A673 (cell line): ENCODE measurements at regions of chr10 and their contacts with region 1.

Region 1: GRCh38 chr10:12348870-12349628 is at the start of gene CAMK1D:
- DNase-seq: peak; percentile 90
- H3K4me3 ChIP-seq: peak within 1 kb of the TSS; percentile 98
- H3K27ac ChIP-seq: peak within 1 kb of the TSS; percentile 80
- H3K4me1 ChIP-seq: peaks cover 19% of the 10 kb centered on the region
- H3K27me3 ChIP-seq: no peaks in the 10 kb centered on the region
- CTCF ChIP-seq: peak; percentile 44; the same call in 1 of the 2 replicates
- total RNA-seq, gene CAMK1D: 23.7 and 27.0 TPM in 2 replicates

Region 2: GRCh38 chr10:12195603-12196506 is 153.2 kb before region 1 on chr10 and contains the starts of genes CDC123 and NUDT5:
- CTCF ChIA-PET with region 1: no interaction called
- POLR2A ChIA-PET with region 1: interaction called, 11 read pairs
- intact Hi-C with region 1: no loop called
- DNase-seq: peak; percentile 94
- H3K4me3 ChIP-seq: peak within 1 kb of the TSS; percentile 93
- H3K27ac ChIP-seq: peak within 1 kb of the TSS; percentile 98
- H3K4me1 ChIP-seq: peaks cover 23% of the 10 kb centered on the region
- H3K27me3 ChIP-seq: no peaks in the 10 kb centered on the region
- CTCF ChIP-seq: no peak
- total RNA-seq, gene CDC123: 189 and 207 TPM in 2 replicates
- total RNA-seq, gene NUDT5: 133 and 137 TPM in 2 replicates

Region 3: GRCh38 chr10:12531305-12532220 is 182.5 kb after region 1 on chr10:
- CTCF ChIA-PET with region 1: interaction called, 4 read pairs
- POLR2A ChIA-PET with region 1: interaction called, 5 read pairs
- intact Hi-C with region 1: loop called (anchors 10 kb)
- DNase-seq: peak; percentile 70
- H3K4me3 ChIP-seq: no peak overlapping the region
- H3K27ac ChIP-seq: no peak overlapping the region
- H3K4me1 ChIP-seq: peaks cover 21% of the 10 kb centered on the region
- H3K27me3 ChIP-seq: no peaks in the 10 kb centered on the region
- CTCF ChIP-seq: no peak